Dorsolateral prefrontal cortex (tissue), 120 donors: ENCODE measurements at regions of chr9 and their contacts with region 1.

Region 1: GRCh38 chr9:136944519-136945279 is at the starts of genes C8G and FBXW5:
- DNase-seq: peak; percentile 81 to 96 (median 90)
- H3K4me3 ChIP-seq: peak within 1 kb of the TSS; percentile 62 to 98 (median 87)
- H3K27ac ChIP-seq: peak within 1 kb of the TSS; percentile 45 to 98 (median 93)
- H3K27me3 ChIP-seq: no peaks in the 10 kb centered on the region
- CTCF ChIP-seq: peak; percentile 85 to 100 (median 98)
- total RNA-seq, gene C8G: 1.00 to 6.0 (median 2.2) TPM in 96 of 120 experiments, not detected in the others
- total RNA-seq, gene FBXW5: 66.7 to 121 (median 89.9) TPM

Region 2: DNA sequence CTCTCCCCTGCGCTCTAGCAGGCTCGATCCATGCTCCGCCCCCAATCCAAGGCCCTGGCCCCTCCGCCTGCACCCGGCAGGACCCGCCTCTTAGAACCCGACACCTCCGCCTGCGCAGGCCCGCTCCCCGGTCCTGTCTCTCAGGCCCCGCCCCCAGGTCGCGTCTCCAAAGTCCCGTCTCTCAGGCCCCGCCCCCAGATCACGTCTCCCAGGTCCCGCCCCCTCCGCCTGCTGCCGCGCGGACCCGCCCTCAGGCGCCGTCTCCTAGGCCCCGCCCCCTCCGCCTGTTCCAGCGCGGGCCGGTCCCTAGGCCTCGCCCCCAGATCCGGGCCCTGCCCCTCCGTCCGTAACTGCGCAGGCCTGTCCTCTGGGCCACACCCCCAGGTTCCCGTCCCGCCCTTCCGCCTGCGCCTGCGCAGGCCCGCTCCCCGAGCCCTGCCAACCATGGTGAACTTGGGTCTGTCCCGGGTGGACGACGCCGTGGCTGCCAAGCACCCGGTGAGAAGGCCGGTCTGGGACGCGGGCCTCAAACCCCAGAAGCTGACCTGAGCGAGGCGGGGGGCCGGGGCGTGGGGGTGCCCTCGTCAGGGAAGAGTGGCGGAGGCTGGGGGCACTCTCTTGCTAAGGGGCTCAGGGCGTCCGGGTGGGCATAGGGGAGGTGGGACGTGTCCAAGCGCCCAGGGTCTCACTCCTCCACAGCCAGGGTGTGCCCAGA is 153.6 kb before region 1 on chr9 and contains the start of gene TMEM141:
- intact Hi-C with region 1: loop called (anchors 1 to 2 kb)
- DNase-seq: peak; percentile 99 to 100 (median 100)
- H3K4me3 ChIP-seq: peak within 1 kb of the TSS; percentile 54 to 95 (median 85)
- H3K27ac ChIP-seq: peak within 1 kb of the TSS; percentile 74 to 99 (median 95)
- H3K27me3 ChIP-seq: no peaks in the 10 kb centered on the region
- CTCF ChIP-seq: peak in 3 of 56 donors; percentile 8 to 23 (median 18)
- total RNA-seq, gene TMEM141: 37.4 to 81.9 (median 55.2) TPM

Region 3: DNA sequence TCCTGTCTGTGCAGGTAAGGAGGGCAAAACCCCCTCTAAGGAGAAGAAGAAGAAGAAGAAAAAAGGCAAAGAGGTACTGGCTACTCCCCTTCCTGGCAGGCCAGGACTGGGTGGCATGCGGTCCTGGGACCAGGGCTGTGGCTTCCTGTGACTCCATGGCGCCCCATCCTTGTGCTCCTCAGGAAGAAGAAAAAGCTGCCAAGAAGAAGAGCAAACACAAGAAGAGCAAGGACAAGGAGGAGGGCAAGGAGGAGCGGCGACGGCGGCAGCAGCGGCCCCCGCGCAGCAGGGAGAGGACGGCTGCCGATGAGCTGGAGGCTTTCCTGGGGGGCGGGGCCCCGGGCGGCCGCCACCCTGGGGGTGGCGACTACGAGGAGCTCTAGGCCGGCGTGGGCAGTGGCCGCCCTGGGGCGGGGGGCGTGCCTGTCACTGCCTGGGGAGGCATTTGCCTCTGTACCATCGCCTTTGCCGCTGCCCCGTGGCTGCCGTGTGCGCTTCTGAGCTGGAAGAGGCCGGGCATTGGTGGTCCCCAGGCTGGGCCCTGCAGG is 104.5 kb before region 1 on chr9:
- intact Hi-C with region 1: loop called in 1 of 2 experiments (anchors 5 kb)
- DNase-seq: no peak
- H3K4me3 ChIP-seq: peak overlapping the region in 1 of 59 donors; percentile 69
- H3K27ac ChIP-seq: peak overlapping the region in 57 of 59 donors; percentile 56 to 99 (median 93)
- H3K27me3 ChIP-seq: no peaks in the 10 kb centered on the region
- CTCF ChIP-seq: no peak

Region 4: DNA sequence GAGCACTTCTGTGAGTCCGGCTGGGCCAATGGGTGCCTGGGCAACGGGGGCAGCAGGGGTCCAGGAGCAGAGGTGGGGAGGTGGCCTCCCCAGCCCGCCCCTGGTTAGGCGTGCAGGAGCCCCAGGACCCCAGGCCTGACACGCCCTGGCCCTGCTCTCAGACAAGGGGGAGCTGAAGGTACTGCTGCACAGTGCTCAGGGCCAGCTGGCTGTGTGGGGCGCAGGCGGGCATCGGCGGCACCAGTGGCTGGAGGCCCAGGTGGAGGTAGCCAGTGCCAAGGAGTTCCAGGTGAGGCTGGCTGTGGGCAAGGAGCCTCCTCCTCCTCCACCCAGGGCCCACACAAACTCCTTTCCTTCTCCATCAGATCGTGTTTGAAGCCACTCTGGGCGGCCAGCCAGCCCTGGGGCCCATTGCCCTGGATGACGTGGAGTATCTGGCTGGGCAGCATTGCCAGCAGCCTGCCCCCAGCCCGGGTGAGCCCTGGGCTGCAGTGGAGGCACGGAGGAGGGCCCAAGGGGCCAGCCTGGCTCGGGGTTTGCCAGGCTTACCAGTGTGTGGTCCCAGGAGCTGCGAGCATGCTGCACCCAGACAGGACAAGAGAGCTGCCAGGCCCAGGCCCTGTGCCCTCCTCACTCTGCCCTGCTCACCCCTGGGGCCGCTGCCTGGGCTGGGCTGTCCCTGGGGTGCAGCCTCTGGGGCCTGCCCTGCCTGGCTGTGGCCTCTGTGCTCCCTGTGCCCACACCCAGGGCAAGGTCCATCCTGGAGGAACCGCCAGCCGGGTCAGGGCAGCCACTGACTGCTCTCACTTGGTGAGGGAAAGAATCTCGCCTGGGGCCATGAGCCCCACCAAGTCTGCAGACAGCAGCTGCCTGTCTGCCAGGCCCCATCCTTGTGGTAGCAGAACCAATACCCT is 85.6 kb before region 1 on chr9:
- intact Hi-C with region 1: loop called (anchors 5 kb)
- DNase-seq: peak; percentile 62 to 84 (median 74)
- H3K4me3 ChIP-seq: no peak overlapping the region
- H3K27ac ChIP-seq: peak overlapping the region in 55 of 59 donors; percentile 3 to 84 (median 62)
- H3K27me3 ChIP-seq: no peaks in the 10 kb centered on the region
- CTCF ChIP-seq: no peak

Region 5: GRCh38 chr9:136885950-136886578 is 58.6 kb before region 1 on chr9 and contains the start of gene TRAF2:
- intact Hi-C with region 1: loop called (anchors 5 kb)
- DNase-seq: peak; percentile 96 to 100 (median 98)
- H3K4me3 ChIP-seq: peak within 1 kb of the TSS; percentile 69 to 96 (median 88)
- H3K27ac ChIP-seq: peak within 1 kb of the TSS in 51 of 59 donors; percentile 1 to 91 (median 69)
- H3K27me3 ChIP-seq: no peaks in the 10 kb centered on the region
- CTCF ChIP-seq: peak in 31 of 56 donors; percentile 9 to 49 (median 27)
- total RNA-seq, gene TRAF2: 11.1 to 47.8 (median 17.7) TPM

Region 6: GRCh38 chr9:136977223-136977622 is 32.5 kb after region 1 on chr9 and contains the start of gene PTGDS:
- intact Hi-C with region 1: loop called (anchors 1 kb)
- DNase-seq: peak; percentile 62 to 97 (median 96)
- H3K4me3 ChIP-seq: peak within 1 kb of the TSS; percentile 44 to 94 (median 81)
- H3K27ac ChIP-seq: peak within 1 kb of the TSS; percentile 90 to 100 (median 98)
- H3K27me3 ChIP-seq: no peaks in the 10 kb centered on the region
- CTCF ChIP-seq: peak in 15 of 56 donors; percentile 6 to 47 (median 18)
- total RNA-seq, gene PTGDS: 1,122 to 4,894 (median 2,197) TPM

Region 7: DNA sequence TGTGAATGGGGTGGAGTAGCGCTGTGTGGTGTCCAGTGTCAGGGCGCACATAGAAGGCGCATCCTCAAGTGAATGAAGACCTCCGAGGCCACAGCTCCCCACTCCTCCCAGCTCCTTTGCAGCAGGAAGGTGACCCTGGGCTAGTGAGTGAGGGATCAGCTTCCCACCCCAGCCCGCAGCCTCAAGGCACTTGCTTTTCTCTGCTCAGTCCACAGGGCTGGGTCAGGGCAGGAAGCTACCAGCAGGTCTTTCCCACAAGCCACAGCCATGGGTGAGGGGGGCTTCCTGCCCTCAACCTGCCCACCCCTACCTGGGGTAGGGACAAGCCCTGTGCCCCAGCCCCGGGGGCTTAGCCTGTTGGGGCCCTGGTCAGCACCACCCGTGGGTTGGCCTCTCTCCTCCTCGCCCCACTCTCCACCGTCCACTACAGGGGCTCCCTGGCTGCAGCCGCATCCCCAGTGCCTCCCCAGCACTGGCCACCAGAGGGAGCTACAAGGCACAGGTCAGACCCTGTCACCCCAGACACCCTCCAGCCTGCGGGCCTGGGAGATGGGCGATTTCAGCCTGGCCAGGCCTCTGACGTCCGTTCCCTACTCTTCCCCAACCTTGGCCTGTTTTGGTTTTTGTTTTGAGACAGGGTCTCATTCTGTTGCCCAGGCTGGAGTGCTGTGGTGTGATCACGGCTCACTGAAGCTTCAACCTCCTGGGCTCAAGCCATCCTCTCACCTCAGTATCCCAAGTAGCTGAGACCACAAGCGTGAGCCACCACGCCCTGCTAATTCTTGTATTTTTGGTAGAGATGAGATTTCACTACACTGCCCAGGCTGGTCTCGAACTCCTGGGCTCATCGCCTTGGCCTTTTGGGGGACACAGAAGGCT is 84.6 kb after region 1 on chr9:
- intact Hi-C with region 1: loop called (anchors 2 to 5 kb)
- DNase-seq: peak; percentile 74 to 86 (median 82)
- H3K4me3 ChIP-seq: peak overlapping the region; percentile 54 to 92 (median 82)
- H3K27ac ChIP-seq: peak overlapping the region; percentile 86 to 100 (median 98)
- H3K27me3 ChIP-seq: no peaks in the 10 kb centered on the region
- CTCF ChIP-seq: peak; percentile 70 to 97 (median 85)